ENCODE measurements at regions of chr18 and their contacts with region 1.

Region 1: GRCh38 chr18:28439870-28440269 is 262.9 kb upstream of the CDH2 start:
- DNase-seq: no peak
- ATAC-seq: no peak
- H3K4me3 ChIP-seq: no peak overlapping the region
- H3K27ac ChIP-seq: no peak overlapping the region
- H3K4me1 ChIP-seq: no peaks in the 10 kb centered on the region
- H3K27me3 ChIP-seq: no peaks in the 10 kb centered on the region
- CTCF ChIP-seq: no peak
- POLR2A ChIP-seq: no peak

Region 2: GRCh38 chr18:28357766-28358401 is 82.0 kb before region 1 on chr18:
- intact Hi-C with region 1: no loop called
- DNase-seq: no peak
- ATAC-seq: no peak
- H3K4me3 ChIP-seq: no peak overlapping the region
- H3K27ac ChIP-seq: no peak overlapping the region
- H3K4me1 ChIP-seq: no peaks in the 10 kb centered on the region
- H3K27me3 ChIP-seq: no peaks in the 10 kb centered on the region
- CTCF ChIP-seq: peak in 2 of 12 donors; percentile 16 to 26
- POLR2A ChIP-seq: no peak

Region 3: GRCh38 chr18:28382215-28382879 is 57.5 kb before region 1 on chr18:
- intact Hi-C with region 1: loop called in 1 of 10 experiments (anchors 10 kb)
- DNase-seq: no peak
- ATAC-seq: no peak
- H3K4me3 ChIP-seq: no peak overlapping the region
- H3K27ac ChIP-seq: no peak overlapping the region
- H3K4me1 ChIP-seq: no peaks in the 10 kb centered on the region
- H3K27me3 ChIP-seq: no peaks in the 10 kb centered on the region
- CTCF ChIP-seq: no peak
- POLR2A ChIP-seq: no peak

Region 4: DNA sequence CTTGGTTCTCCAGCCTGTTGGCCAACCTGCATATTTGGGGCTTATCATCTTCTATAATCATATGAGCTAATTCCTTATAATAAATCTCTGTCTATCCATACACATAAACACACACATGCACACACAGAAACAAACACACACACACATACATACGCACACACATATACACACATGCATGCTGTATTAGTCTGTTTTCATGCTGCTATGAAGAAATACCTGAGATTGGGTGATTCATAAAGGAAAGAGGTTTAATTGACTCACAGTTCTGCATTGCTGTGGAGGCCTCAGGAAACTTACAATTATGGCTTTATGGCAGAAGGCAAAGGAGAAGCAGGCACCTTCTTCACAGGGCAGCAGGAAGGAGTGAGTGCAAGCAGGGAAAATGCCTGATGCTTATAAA is 444.4 kb after region 1 on chr18:
- intact Hi-C with region 1: loop called in 1 of 10 experiments (anchors 10 kb)
- DNase-seq: no peak
- ATAC-seq: no peak
- H3K4me3 ChIP-seq: no peak overlapping the region
- H3K27ac ChIP-seq: no peak overlapping the region
- H3K4me1 ChIP-seq: no peaks in the 10 kb centered on the region
- H3K27me3 ChIP-seq: no peaks in the 10 kb centered on the region
- CTCF ChIP-seq: no peak
- POLR2A ChIP-seq: no peak